Activated CD4-positive, alpha-beta memory T cell treated with anti-CD3 and anti-CD28 coated beads for 36 hours (primary cell): ENCODE measurements at regions of chr1 and their contacts with region 1.

Region 1: DNA sequence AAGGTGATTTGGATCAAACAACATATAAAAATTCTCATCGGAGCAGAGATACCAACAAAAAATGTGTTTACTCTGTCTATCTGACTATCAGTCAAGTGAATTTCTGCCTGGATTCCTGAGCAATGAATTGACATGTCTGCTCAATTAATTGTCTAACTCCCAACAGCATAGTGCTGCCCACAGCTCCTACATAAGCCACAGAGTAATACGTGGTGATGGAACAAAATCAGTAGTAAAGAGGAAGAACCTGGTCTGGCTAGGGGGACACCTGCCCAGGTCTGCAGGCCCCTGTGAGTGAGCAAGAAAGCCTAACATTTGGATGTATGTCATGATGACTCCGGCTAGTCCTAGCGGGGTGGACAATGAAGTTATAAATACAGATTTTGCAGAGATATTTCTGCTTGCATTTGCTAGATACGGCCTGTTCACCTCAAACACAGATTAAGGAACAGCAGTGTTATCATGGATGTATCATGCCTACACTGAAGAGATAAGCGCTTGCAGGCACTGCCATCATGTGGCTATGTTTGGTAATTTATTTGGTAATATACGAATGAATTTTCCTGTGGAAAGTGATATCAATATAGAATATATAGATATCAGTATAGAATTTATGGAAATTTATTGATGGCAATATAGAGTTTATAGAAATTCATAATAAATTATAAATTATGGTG is 69.6 kb upstream of the LRRC8B start:
- DNase-seq: peak; percentile 71
- H3K4me3 Mint-ChIP-seq: no peak overlapping the region
- H3K27ac Mint-ChIP-seq: no peak overlapping the region
- H3K4me1 Mint-ChIP-seq: peaks cover 22% of the 10 kb centered on the region
- H3K27me3 Mint-ChIP-seq: peaks cover 21% of the 10 kb centered on the region

Region 2: GRCh38 chr1:88983791-88984559 is 471.0 kb before region 1 on chr1:
- CTCF ChIA-PET with region 1: interaction called, 34 read pairs
- POLR2A ChIA-PET with region 1: interaction called, 3 read pairs
- intact Hi-C with region 1: no loop called
- DNase-seq: peak; percentile 41
- H3K4me3 Mint-ChIP-seq: peak overlapping the region; percentile 17
- H3K27ac Mint-ChIP-seq: peak overlapping the region; percentile 80
- H3K4me1 Mint-ChIP-seq: peaks cover 87% of the 10 kb centered on the region
- H3K27me3 Mint-ChIP-seq: no peaks in the 10 kb centered on the region

Region 3: GRCh38 chr1:89085781-89086180 is 369.2 kb before region 1 on chr1:
- CTCF ChIA-PET with region 1: interaction called, 13 read pairs
- POLR2A ChIA-PET with region 1: no interaction called
- intact Hi-C with region 1: loop called (anchors 5 kb)
- DNase-seq: peak; percentile 43
- H3K4me3 Mint-ChIP-seq: no peak overlapping the region
- H3K27ac Mint-ChIP-seq: no peak overlapping the region
- H3K4me1 Mint-ChIP-seq: peaks cover 6% of the 10 kb centered on the region
- H3K27me3 Mint-ChIP-seq: no peaks in the 10 kb centered on the region

Region 4: GRCh38 chr1:89274411-89274857 is 180.5 kb before region 1 on chr1:
- CTCF ChIA-PET with region 1: interaction called, 5 read pairs
- POLR2A ChIA-PET with region 1: no interaction called
- intact Hi-C with region 1: loop called (anchors 2 kb)
- DNase-seq: no peak
- H3K4me3 Mint-ChIP-seq: peak overlapping the region; percentile 80
- H3K27ac Mint-ChIP-seq: peak overlapping the region; percentile 99
- H3K4me1 Mint-ChIP-seq: peaks cover 76% of the 10 kb centered on the region
- H3K27me3 Mint-ChIP-seq: no peaks in the 10 kb centered on the region

Region 5: DNA sequence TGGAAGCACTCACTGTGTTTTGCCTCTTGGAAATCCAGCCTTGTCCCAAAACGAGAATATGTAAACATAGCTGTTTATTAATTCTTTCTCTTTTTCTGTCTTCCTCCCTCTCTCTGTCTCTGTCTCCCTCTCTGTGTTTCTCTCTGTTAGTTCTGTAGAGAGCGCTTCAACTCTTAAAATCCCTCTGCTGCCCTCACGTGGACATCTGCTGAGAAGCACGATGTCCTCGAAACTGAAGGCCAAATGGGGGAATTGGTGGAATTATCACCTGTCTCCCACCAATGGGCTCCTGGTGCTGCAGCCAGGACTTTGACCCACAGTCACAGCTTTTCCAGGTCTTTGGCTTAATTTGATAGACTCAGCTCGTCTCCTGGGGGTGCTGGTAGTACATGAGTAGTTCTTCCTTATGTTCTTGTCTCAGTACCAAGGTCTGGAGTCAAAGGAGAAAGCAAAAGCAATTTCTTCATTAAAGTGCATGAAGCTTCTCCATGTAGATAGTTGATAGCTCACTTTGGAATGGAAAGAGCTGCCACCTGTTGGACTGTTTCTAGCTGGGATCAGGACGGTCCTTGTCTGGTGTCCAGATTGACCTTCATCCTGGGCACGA is 96.6 kb before region 1 on chr1:
- CTCF ChIA-PET with region 1: interaction called, 7 read pairs
- POLR2A ChIA-PET with region 1: interaction called, 5 read pairs
- intact Hi-C with region 1: loop called (anchors 1 kb)
- DNase-seq: peak; percentile 86
- H3K4me3 Mint-ChIP-seq: peak overlapping the region; percentile 68
- H3K27ac Mint-ChIP-seq: peak overlapping the region; percentile 72
- H3K4me1 Mint-ChIP-seq: peaks cover 41% of the 10 kb centered on the region
- H3K27me3 Mint-ChIP-seq: no peaks in the 10 kb centered on the region

Region 6: GRCh38 chr1:89391686-89392085 is 63.3 kb before region 1 on chr1:
- CTCF ChIA-PET with region 1: no interaction called
- POLR2A ChIA-PET with region 1: no interaction called
- intact Hi-C with region 1: no loop called
- DNase-seq: no peak
- H3K4me3 Mint-ChIP-seq: no peak overlapping the region
- H3K27ac Mint-ChIP-seq: no peak overlapping the region
- H3K4me1 Mint-ChIP-seq: no peaks in the 10 kb centered on the region
- H3K27me3 Mint-ChIP-seq: no peaks in the 10 kb centered on the region

Region 7: DNA sequence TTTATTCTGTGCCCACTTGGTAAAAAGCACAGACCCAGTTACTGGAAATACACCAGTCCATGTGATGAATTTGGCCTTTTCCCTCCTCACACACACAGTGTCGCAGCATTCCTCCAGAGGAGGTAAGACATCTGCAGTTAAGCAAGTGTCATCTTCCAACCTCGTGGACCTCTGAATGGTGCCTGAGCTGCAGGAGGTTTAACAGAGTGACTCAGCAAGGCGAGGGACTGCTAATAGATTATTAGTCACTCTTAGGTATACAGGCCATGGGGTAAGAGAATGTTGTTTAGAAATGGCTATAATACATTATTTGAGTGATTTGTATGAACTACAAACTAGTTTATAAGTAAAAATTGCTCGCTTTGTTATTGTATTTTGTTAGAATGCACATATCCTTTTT is 61.1 kb after region 1 on chr1:
- CTCF ChIA-PET with region 1: no interaction called
- POLR2A ChIA-PET with region 1: no interaction called
- intact Hi-C with region 1: no loop called
- DNase-seq: no peak
- H3K4me3 Mint-ChIP-seq: no peak overlapping the region
- H3K27ac Mint-ChIP-seq: peak overlapping the region; percentile 49
- H3K4me1 Mint-ChIP-seq: peaks cover 22% of the 10 kb centered on the region
- H3K27me3 Mint-ChIP-seq: peaks cover 10% of the 10 kb centered on the region

Region 8: GRCh38 chr1:89706700-89707012 is 251.7 kb after region 1 on chr1:
- CTCF ChIA-PET with region 1: no interaction called
- POLR2A ChIA-PET with region 1: no interaction called
- intact Hi-C with region 1: no loop called
- DNase-seq: no peak
- H3K4me3 Mint-ChIP-seq: no peak overlapping the region
- H3K27ac Mint-ChIP-seq: no peak overlapping the region
- H3K4me1 Mint-ChIP-seq: peaks cover 38% of the 10 kb centered on the region
- H3K27me3 Mint-ChIP-seq: no peaks in the 10 kb centered on the region